Activated T-helper 1 cell treated with anti-CD3 and anti-CD28 coated beads, Interleukin-12 subunit alpha, Interleukin-12 subunit beta, Interleukin-2, Interleukin-4 antibody, amounts not matched to agents 30 ng/mL and 10 ng/mL and 1 ng/mL, durations not matched to agents 14 hours and 24 hours and 36 hours (primary cell): ENCODE measurements at regions of chr17 and their contacts with region 1.

Region 1: GRCh38 chr17:60971515-60972369 is 294.1 kb downstream of the BCAS3 start:
- DNase-seq: no peak
- H3K4me3 Mint-ChIP-seq: no peak overlapping the region
- H3K27ac Mint-ChIP-seq: no peak overlapping the region
- H3K4me1 Mint-ChIP-seq: no peaks in the 10 kb centered on the region
- H3K27me3 Mint-ChIP-seq: peaks cover 11% of the 10 kb centered on the region

Region 2: DNA sequence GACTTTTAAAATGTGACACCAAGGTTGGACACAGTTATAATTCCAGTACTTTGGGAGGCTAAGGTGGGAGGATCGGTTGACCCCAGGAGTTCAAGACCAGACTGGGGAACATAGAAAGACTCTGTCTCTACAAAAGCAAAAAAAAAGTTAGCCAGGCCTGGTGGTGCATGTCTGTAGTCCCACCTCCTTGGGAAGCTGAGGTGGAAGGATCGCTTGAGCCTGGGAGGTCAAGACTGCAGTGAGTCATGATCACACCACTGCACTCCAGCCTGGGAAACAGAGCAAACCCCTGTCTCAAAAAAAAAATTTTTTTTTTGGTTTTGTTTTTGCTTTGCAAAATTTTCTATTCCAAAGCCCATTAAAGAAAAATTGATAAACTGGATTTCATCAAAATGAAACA is 12.7 kb before region 1 on chr17:
- intact Hi-C with region 1: no loop called
- DNase-seq: no peak
- H3K4me3 Mint-ChIP-seq: no peak overlapping the region
- H3K27ac Mint-ChIP-seq: no peak overlapping the region
- H3K4me1 Mint-ChIP-seq: no peaks in the 10 kb centered on the region
- H3K27me3 Mint-ChIP-seq: peaks cover 5% of the 10 kb centered on the region

Region 3: DNA sequence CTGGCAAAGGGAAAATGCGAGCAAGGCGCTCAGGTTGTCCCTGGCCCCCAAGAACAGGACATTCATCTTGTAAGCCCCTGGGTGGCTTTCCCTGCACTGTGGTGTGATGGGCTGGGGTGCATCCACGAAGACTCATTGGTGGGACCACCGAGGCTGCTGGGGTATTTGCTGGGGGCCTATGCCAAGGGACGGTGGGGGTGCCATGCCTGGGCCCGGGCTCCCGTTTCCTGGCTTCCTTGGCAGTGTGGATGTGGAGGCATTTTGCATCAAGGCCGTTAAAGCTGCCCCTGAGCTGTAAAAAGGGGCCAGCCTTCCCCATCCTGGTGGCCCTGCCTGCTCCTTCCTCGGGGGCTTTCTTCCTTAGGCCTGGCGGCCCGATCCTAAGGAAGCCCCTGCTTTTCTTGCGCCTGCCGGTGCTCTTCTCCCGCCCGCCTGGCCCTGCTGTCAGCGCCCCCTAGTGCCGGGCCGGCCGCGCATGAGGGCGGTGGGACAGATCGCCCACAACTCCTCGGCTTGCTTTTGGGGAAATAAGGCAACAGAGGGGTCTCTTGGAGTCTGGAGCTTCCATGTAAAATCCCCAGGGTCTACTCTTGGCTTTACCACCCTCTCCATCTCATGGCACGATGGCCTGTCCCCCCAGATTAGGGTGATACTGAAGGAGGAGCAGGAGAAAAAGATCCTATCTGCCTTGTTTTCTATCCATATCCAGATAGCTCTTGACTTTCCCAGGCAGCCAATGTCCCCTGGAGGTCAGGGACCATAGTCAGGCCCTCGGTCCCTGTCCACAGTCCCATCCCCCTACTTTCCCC is 418.1 kb after region 1 on chr17:
- intact Hi-C with region 1: loop called (anchors 1 kb)
- DNase-seq: no peak
- H3K4me3 Mint-ChIP-seq: no peak overlapping the region
- H3K27ac Mint-ChIP-seq: no peak overlapping the region
- H3K4me1 Mint-ChIP-seq: no peaks in the 10 kb centered on the region
- H3K27me3 Mint-ChIP-seq: peaks cover 24% of the 10 kb centered on the region